ENCODE measurements at regions of chr6 and their contacts with region 1.

Region 1: GRCh38 chr6:52271852-52272460 is 12.6 kb downstream of the MCM3 start:
- DNase-seq: no peak
- ATAC-seq: no peak
- H3K4me3 ChIP-seq: no peak overlapping the region
- H3K4me3 Mint-ChIP-seq: no peak overlapping the region
- H3K27ac ChIP-seq: no peak overlapping the region
- H3K27ac Mint-ChIP-seq: no peak overlapping the region
- H3K4me1 ChIP-seq: no peaks in the 10 kb centered on the region
- H3K4me1 Mint-ChIP-seq: no peaks in the 10 kb centered on the region
- H3K27me3 ChIP-seq: no peaks in the 10 kb centered on the region
- H3K27me3 Mint-ChIP-seq: no peaks in the 10 kb centered on the region
- CTCF ChIP-seq: no peak

Region 2: DNA sequence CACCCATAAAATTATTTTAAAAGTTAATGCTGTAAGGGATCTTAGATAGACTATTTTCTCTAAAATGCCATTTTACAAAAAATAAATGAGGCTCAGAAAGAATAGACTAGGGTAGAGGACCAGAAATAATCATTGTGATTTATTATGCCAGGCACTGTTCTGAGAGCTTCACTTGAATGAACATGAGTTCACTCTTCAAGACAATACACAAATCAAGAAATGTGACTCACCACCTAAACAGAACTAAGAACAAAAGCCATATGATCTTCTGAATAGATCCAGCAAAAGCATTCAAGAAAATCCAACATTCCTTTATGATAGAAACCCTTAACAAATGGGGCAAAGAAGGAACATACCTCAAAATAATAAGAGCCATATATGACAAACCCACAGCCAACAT is 766.5 kb before region 1 on chr6:
- CTCF ChIA-PET with region 1: no interaction called
- POLR2A ChIA-PET with region 1: no interaction called
- intact Hi-C with region 1: no loop called
- DNase-seq: no peak
- ATAC-seq: no peak
- H3K4me3 ChIP-seq: no peak overlapping the region
- H3K4me3 Mint-ChIP-seq: no peak overlapping the region
- H3K27ac ChIP-seq: no peak overlapping the region
- H3K27ac Mint-ChIP-seq: no peak overlapping the region
- H3K4me1 ChIP-seq: no peaks in the 10 kb centered on the region
- H3K4me1 Mint-ChIP-seq: no peaks in the 10 kb centered on the region
- H3K27me3 ChIP-seq: no peaks in the 10 kb centered on the region
- H3K27me3 Mint-ChIP-seq: no peaks in the 10 kb centered on the region
- CTCF ChIP-seq: no peak

Region 3: GRCh38 chr6:52588087-52588709 is 316.2 kb after region 1 on chr6:
- CTCF ChIA-PET with region 1: interaction called, 3 read pairs
- POLR2A ChIA-PET with region 1: no interaction called
- intact Hi-C with region 1: loop called in 1 of 2 experiments (anchors 5 kb)
- DNase-seq: no peak
- ATAC-seq: no peak
- H3K4me3 ChIP-seq: no peak overlapping the region
- H3K4me3 Mint-ChIP-seq: no peak overlapping the region
- H3K27ac ChIP-seq: no peak overlapping the region
- H3K27ac Mint-ChIP-seq: no peak overlapping the region
- H3K4me1 ChIP-seq: no peaks in the 10 kb centered on the region
- H3K4me1 Mint-ChIP-seq: no peaks in the 10 kb centered on the region
- H3K27me3 ChIP-seq: no peaks in the 10 kb centered on the region
- H3K27me3 Mint-ChIP-seq: no peaks in the 10 kb centered on the region
- CTCF ChIP-seq: no peak

Region 4: GRCh38 chr6:52946306-52946705 is 674.4 kb after region 1 on chr6:
- CTCF ChIA-PET with region 1: no interaction called
- POLR2A ChIA-PET with region 1: no interaction called
- intact Hi-C with region 1: no loop called
- DNase-seq: no peak
- ATAC-seq: no peak
- H3K4me3 ChIP-seq: no peak overlapping the region
- H3K4me3 Mint-ChIP-seq: no peak overlapping the region
- H3K27ac ChIP-seq: no peak overlapping the region
- H3K27ac Mint-ChIP-seq: no peak overlapping the region
- H3K4me1 ChIP-seq: no peaks in the 10 kb centered on the region
- H3K4me1 Mint-ChIP-seq: peaks cover 7% of the 10 kb centered on the region
- H3K27me3 ChIP-seq: no peaks in the 10 kb centered on the region
- H3K27me3 Mint-ChIP-seq: peaks cover 18% of the 10 kb centered on the region
- CTCF ChIP-seq: no peak

Region 5: GRCh38 chr6:53070806-53071205 is 798.9 kb after region 1 on chr6:
- CTCF ChIA-PET with region 1: no interaction called
- POLR2A ChIA-PET with region 1: no interaction called
- intact Hi-C with region 1: loop called in 1 of 2 experiments (anchors 5 kb)
- DNase-seq: peak in 2 of 9 experiments; percentile 30 to 46
- ATAC-seq: peak; percentile 43
- H3K4me3 ChIP-seq: no peak overlapping the region
- H3K4me3 Mint-ChIP-seq: no peak overlapping the region
- H3K27ac ChIP-seq: no peak overlapping the region
- H3K27ac Mint-ChIP-seq: no peak overlapping the region
- H3K4me1 ChIP-seq: peaks cover 16% of the 10 kb centered on the region
- H3K4me1 Mint-ChIP-seq: peaks cover 43% of the 10 kb centered on the region
- H3K27me3 ChIP-seq: no peaks in the 10 kb centered on the region
- H3K27me3 Mint-ChIP-seq: no peaks in the 10 kb centered on the region
- CTCF ChIP-seq: no peak

Measured in CD8-positive, alpha-beta T cell (primary cell).